HepG2 (cell line): ENCODE measurements at regions of chr12 and their contacts with region 1.

Region 1: GRCh38 chr12:107207931-107208525 is 114.7 kb upstream of the CRY1 start:
- DNase-seq: no peak
- ATAC-seq: no peak
- H3K4me3 ChIP-seq: no peak overlapping the region
- H3K27ac ChIP-seq: no peak overlapping the region
- H3K4me1 ChIP-seq: no peaks in the 10 kb centered on the region
- H3K27me3 ChIP-seq: no peaks in the 10 kb centered on the region
- CTCF ChIP-seq: no peak
- EP300 ChIP-seq: no peak
- POLR2A ChIP-seq: no peak
- RAD21 ChIP-seq: no peak

Region 2: DNA sequence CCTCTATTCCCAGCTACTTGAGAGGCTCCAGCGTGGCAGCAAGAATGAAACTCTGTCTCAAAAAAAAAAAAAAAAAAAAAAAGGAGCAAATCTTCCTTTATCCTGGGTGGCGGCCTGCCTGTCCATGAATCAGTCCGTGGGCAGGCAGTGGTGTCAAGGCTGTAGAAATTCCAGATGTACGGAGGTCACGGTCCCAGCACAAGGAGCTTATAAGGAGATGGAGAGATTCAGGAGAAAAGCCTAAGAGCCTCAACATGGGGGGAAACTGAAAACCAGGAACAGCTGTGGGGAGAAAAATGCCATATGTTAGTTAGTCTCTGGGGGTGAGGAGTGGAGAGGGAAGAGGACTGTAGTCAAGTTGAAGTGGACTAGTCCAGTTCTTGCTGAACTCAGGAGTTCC is 15.8 kb after region 1 on chr12:
- CTCF ChIA-PET with region 1: no interaction called
- POLR2A ChIA-PET with region 1: no interaction called
- in situ Hi-C with region 1: no loop called
- intact Hi-C with region 1: loop called (anchors 1 kb)
- DNase-seq: no peak
- ATAC-seq: no peak
- H3K4me3 ChIP-seq: no peak overlapping the region
- H3K27ac ChIP-seq: no peak overlapping the region
- H3K4me1 ChIP-seq: peaks cover 9% of the 10 kb centered on the region
- H3K27me3 ChIP-seq: peaks cover 1 to 15% of the 10 kb centered on the region in 2 experiments; a peak in 3 of 5 replicates
- CTCF ChIP-seq: no peak
- EP300 ChIP-seq: no peak
- POLR2A ChIP-seq: no peak
- RAD21 ChIP-seq: no peak

Region 3: GRCh38 chr12:107277855-107278254 is 69.8 kb after region 1 on chr12:
- CTCF ChIA-PET with region 1: no interaction called
- POLR2A ChIA-PET with region 1: no interaction called
- in situ Hi-C with region 1: no loop called
- intact Hi-C with region 1: no loop called
- DNase-seq: no peak
- ATAC-seq: no peak
- H3K4me3 ChIP-seq: no peak overlapping the region
- H3K27ac ChIP-seq: no peak overlapping the region
- H3K4me1 ChIP-seq: no peaks in the 10 kb centered on the region
- H3K27me3 ChIP-seq: 0 out of 5 replicates have a peak, but pooled peaks cover 0 to 4% of the 10 kb centered on the region in 2 experiments
- CTCF ChIP-seq: no peak
- EP300 ChIP-seq: no peak
- POLR2A ChIP-seq: no peak
- RAD21 ChIP-seq: no peak